ENCODE measurements at regions of chr6 and their contacts with region 1.

Region 1: DNA sequence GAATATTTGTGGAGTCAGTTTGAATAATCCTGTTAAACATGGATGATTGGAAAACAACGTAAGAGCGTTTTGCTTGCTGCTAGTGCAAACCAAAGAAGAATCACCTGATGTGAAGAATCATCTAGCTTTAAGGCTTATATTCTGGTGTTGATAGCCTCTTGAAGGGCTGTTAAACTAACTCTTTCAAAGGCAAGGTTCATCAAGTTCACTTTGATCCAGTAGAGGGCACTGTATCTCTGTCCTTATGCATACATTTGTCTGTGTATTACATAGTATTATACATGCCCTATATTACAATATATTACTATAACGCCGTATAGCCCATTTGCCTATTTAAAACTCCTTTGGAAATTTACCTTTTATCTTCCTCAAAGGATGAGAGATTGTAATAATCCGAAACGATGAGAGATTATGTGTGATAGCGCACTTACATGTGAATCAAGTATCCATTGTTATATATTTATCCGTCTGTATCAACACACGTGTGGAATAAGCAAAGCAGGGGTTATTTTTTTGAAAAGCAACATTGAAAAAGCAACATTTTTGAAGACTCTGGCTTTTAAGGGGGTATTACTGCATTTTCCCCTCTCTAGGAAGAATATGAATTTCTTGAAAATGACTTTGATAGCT is 50.8 kb upstream of the NRN1 start:
- DNase-seq: no peak
- ATAC-seq: no peak
- H3K4me3 ChIP-seq: no peak overlapping the region
- H3K27ac ChIP-seq: no peak overlapping the region
- H3K4me1 ChIP-seq: no peaks in the 10 kb centered on the region
- H3K27me3 ChIP-seq: peaks cover 2% of the 10 kb centered on the region

Region 2: DNA sequence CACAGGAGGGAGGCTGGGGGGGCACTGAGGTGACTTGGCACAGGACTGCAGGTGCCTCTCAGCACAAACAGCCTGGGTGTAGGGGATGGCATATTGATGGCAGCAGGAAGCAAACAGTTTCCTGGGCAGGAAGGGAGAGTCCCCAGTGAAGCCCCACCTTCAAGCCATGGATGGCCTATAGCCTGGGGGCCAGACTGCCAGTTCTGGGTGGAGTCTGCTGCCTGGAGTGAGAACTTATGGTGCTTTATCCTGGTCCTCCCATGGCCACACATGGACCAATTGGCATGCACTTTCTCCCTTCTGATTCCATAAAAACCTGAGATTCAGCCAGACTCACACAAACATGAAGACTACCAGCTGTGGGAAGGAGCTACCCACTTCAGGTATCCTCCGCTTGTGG is 64.4 kb after region 1 on chr6:
- intact Hi-C with region 1: no loop called
- DNase-seq: no peak
- ATAC-seq: no peak
- H3K4me3 ChIP-seq: no peak overlapping the region
- H3K27ac ChIP-seq: no peak overlapping the region
- H3K4me1 ChIP-seq: no peaks in the 10 kb centered on the region
- H3K27me3 ChIP-seq: no peaks in the 10 kb centered on the region

Region 3: DNA sequence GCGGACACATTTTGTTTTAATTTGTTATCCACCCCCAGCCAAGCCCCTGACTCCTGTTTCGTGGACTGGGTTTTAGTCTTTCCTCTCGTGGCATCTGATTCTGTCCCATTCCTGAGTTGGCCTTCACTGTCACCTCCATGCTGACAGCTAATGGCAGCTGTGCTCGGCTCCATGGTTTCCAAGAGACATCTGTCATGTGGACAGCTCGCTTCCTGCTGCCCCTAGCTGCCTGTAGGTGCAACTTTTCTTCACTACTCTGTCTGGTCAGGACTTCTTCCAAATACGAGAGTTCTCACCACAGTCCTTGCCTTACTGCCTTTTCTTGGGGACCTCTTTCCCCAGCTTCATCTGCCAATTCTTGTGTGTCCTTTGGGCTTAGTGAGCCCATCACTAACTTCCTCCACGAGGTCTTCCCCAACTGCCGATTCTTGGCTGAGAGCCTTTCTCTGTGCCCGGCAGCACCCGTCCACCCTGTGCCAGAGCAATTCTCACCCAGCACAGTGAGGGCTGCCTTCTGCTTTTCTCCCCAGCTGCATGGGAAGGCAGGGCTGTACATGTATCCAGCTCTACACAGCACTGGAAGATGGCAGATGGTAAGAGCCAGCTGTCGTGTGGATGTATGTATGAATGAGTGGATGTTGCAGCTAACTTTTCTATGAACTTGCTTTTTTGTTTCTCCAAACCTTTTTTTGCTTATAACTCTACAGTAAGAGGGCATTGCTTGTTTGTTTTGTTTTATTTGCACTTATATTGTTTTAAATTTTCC is 122.5 kb after region 1 on chr6:
- intact Hi-C with region 1: no loop called
- DNase-seq: no peak
- ATAC-seq: no peak
- H3K4me3 ChIP-seq: no peak overlapping the region
- H3K27ac ChIP-seq: no peak overlapping the region
- H3K4me1 ChIP-seq: no peaks in the 10 kb centered on the region
- H3K27me3 ChIP-seq: no peaks in the 10 kb centered on the region

Region 4: GRCh38 chr6:6315660-6316059 is 258.1 kb after region 1 on chr6:
- intact Hi-C with region 1: loop called in 1 of 4 experiments (anchors 10 kb)
- DNase-seq: peak; percentile 39 to 78 (median 49)
- ATAC-seq: no peak
- H3K4me3 ChIP-seq: no peak overlapping the region
- H3K27ac ChIP-seq: no peak overlapping the region
- H3K4me1 ChIP-seq: no peaks in the 10 kb centered on the region
- H3K27me3 ChIP-seq: no peaks in the 10 kb centered on the region

Region 5: DNA sequence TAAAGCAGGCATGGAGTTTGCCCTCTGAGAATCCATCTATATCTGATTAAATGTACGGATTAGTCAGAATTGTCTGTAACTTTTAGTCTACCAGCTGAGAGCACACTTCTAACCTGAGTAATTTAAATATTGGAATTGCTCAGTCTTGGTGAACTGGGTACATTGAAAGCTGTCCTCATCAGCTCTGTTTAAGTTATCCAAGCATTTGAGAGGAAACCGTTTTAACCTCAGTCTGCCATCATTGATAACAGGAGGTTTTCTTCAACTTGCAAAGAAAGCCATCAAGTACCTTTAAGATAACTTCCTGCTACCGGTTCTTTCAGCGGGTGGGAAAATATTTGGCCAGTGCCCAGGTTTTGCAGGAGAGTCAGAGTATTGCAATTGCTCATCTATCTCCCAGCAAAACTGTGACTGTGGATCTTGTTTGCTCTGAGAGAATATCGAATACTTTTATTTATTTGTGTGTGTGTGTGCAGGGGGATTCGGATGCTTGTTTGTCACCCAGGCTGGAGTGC is 294.0 kb after region 1 on chr6:
- intact Hi-C with region 1: no loop called
- DNase-seq: no peak
- ATAC-seq: no peak
- H3K4me3 ChIP-seq: no peak overlapping the region
- H3K27ac ChIP-seq: no peak overlapping the region
- H3K4me1 ChIP-seq: no peaks in the 10 kb centered on the region
- H3K27me3 ChIP-seq: no peaks in the 10 kb centered on the region

Region 6: DNA sequence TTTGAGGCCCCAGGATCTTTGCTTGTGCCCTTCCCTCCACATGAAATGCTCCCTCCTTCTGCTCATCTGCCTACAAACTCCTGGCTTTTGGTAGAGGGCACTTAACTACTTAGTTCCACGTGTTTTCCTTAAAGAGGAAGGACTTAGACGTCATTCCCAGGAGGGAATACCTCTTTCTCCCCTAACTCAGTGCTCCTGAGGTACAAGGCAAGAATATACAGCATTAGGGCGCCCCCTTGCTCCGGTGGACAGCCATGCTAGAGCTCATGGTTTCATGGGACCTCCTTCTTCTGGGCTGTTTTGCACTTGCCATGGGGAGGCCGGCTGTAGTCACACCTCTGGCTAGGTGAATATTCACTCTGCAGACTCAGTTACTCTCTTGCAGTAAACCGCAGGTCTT is 437.1 kb after region 1 on chr6:
- intact Hi-C with region 1: loop called in 3 of 4 experiments (anchors 5 to 10 kb)
- DNase-seq: peak; percentile 58 to 82 (median 70)
- ATAC-seq: peak; percentile 61 to 64
- H3K4me3 ChIP-seq: no peak overlapping the region
- H3K27ac ChIP-seq: no peak overlapping the region
- H3K4me1 ChIP-seq: no peaks in the 10 kb centered on the region
- H3K27me3 ChIP-seq: no peaks in the 10 kb centered on the region

Region 7: GRCh38 chr6:6547110-6547879 is 489.8 kb after region 1 on chr6:
- intact Hi-C with region 1: loop called (anchors 2 to 5 kb)
- DNase-seq: peak; percentile 85 to 91 (median 90)
- ATAC-seq: peak; percentile 96 to 97
- H3K4me3 ChIP-seq: peak overlapping the region; percentile 34
- H3K27ac ChIP-seq: no peak overlapping the region
- H3K4me1 ChIP-seq: no peaks in the 10 kb centered on the region
- H3K27me3 ChIP-seq: no peaks in the 10 kb centered on the region